Dorsolateral prefrontal cortex (tissue), 120 donors: ENCODE measurements at regions of chr6 and their contacts with region 1.

Region 1: GRCh38 chr6:70289299-70289698 is 13.6 kb downstream of the COL9A1 start:
- DNase-seq: no peak
- H3K4me3 ChIP-seq: no peak overlapping the region
- H3K27ac ChIP-seq: no peak overlapping the region
- H3K27me3 ChIP-seq: peaks cover 0 to 18% (median 0%) of the 10 kb centered on the region in 45 donors
- CTCF ChIP-seq: peak in 51 of 56 donors; percentile 14 to 67 (median 36)

Region 2: DNA sequence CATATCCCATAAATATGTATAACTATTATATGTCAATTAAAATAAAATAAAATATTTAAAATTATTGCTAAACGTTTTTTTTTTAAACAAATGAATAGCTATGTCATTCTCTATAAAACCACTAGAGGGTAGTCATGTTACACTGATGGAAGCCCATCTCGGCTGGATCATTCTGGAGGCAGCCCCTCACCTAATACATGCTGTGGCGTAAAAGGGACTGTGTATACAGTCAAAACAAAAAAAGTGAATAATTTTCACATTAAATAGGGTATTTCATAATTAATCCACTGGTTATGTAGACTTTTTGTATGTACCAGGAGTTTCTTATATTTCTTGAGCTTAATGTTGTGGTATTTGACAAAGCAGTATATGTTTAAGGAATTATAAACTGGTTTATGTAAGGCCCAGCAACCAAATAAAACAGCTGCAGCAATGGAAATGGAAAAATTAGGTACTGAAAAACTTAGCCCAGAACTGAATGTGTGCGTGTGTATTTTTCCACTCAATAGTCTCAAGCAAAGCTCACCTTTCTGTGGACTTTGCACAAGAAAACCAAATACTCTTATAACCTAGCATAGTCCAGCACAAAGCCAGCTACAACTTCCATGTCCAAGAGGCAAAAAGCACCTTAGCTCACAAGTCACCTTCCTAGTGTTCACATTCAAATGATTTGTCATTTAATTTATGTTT is 68.1 kb before region 1 on chr6:
- intact Hi-C with region 1: loop called in 1 of 2 experiments (anchors 5 kb)
- DNase-seq: peak in 1 of 10 donors; percentile 23
- H3K4me3 ChIP-seq: peak overlapping the region in 1 of 59 donors; percentile 17
- H3K27ac ChIP-seq: no peak overlapping the region
- H3K27me3 ChIP-seq: peaks cover 0 to 4% (median 0%) of the 10 kb centered on the region in 45 donors
- CTCF ChIP-seq: peak; percentile 76 to 98 (median 89)